AG04450 (cell line): ENCODE measurements at regions of chr17 and their contacts with region 1.

Region 1: DNA sequence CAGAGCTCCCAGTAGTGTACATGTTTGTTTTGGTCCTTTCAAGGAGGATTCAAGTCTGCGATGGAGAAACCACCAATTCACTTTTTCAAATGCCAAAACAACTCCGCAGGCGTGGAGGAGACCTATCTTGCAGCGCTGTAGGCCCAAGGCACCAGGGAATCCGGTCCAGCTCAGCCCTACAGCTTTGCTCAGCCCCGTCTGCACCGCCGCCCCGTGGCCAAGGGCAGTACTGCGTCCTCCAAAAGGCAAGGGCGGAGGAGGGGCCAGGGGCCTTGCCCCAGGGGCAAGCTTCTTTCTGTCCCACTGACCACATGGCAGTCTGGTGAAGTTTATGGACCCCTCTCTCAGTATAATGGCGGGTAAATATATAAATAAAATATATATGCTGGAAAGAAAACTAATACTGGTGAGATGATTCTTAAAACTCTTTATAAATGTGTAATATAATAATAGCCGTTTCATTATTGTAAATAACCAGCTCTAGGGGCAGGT is 709 bp upstream of the CD300LG start:
- DNase-seq: peak; percentile 33
- H3K4me3 ChIP-seq: no peak overlapping the region
- H3K27ac ChIP-seq: no peak overlapping the region
- H3K27me3 ChIP-seq: peaks cover 18% of the 10 kb centered on the region
- CTCF ChIP-seq: peak; percentile 99

Region 2: DNA sequence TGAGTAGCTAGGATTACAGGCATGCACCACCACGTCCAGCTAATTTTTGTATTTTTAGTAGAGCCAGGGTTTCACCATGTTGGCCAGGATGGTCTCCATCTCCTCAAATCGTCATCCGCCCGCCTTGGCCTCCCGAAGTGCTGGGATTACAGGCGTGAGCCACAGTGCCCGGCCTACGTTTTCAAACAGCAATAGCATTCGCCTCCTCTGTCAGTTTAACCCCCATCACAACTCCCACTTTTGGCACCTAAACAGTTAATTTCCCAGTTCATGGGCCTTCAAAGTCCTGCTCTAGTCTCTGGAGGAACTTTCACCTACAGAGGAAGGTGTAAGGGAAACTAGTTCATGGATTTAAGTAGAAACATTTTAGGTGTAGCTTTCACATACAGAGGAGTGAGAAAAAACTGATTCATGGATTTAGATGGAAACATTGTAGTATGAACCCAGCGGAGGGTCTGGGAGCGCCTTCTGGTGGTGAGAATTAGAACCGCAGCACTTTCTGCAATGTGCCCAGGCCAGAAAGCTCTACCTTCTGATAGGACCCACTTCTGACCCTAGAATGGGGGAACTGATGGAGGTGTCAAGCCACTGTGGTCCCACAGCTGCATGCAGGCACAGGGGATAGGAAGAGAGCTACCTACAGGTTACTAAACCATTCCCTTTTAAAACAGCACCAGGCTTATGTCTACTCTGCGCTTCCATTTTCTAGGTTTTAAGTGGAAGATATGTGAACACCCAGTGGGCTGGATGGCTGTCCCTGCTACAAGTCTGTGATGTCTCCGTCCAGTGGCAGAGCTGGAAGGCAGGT is 172.5 kb before region 1 on chr17:
- CTCF ChIA-PET with region 1: no interaction called
- POLR2A ChIA-PET with region 1: no interaction called
- DNase-seq: no peak
- H3K4me3 ChIP-seq: no peak overlapping the region
- H3K27ac ChIP-seq: no peak overlapping the region
- H3K27me3 ChIP-seq: peaks cover 3% of the 10 kb centered on the region
- CTCF ChIP-seq: peak; percentile 99

Region 3: GRCh38 chr17:43694077-43694870 is 152.0 kb before region 1 on chr17:
- CTCF ChIA-PET with region 1: interaction called, 10 read pairs
- POLR2A ChIA-PET with region 1: no interaction called
- DNase-seq: peak; percentile 55
- H3K4me3 ChIP-seq: no peak overlapping the region
- H3K27ac ChIP-seq: no peak overlapping the region
- H3K27me3 ChIP-seq: peaks cover 12% of the 10 kb centered on the region
- CTCF ChIP-seq: peak; percentile 92

Region 4: GRCh38 chr17:43760254-43760852 is 85.9 kb before region 1 on chr17:
- CTCF ChIA-PET with region 1: interaction called, 27 read pairs
- POLR2A ChIA-PET with region 1: no interaction called
- DNase-seq: peak; percentile 86
- H3K4me3 ChIP-seq: no peak overlapping the region
- H3K27ac ChIP-seq: no peak overlapping the region
- H3K27me3 ChIP-seq: peaks cover 29% of the 10 kb centered on the region
- CTCF ChIP-seq: peak; percentile 100

Region 5: GRCh38 chr17:43766413-43767052 is 79.7 kb before region 1 on chr17:
- CTCF ChIA-PET with region 1: interaction called, 27 read pairs
- POLR2A ChIA-PET with region 1: interaction called, 3 read pairs
- DNase-seq: no peak
- H3K4me3 ChIP-seq: no peak overlapping the region
- H3K27ac ChIP-seq: no peak overlapping the region
- H3K27me3 ChIP-seq: no peaks in the 10 kb centered on the region
- CTCF ChIP-seq: peak; percentile 82

Region 6: GRCh38 chr17:43790311-43790940 is 55.8 kb before region 1 on chr17:
- CTCF ChIA-PET with region 1: interaction called, 12 read pairs
- POLR2A ChIA-PET with region 1: no interaction called
- DNase-seq: no peak
- H3K4me3 ChIP-seq: no peak overlapping the region
- H3K27ac ChIP-seq: no peak overlapping the region
- H3K27me3 ChIP-seq: no peaks in the 10 kb centered on the region
- CTCF ChIP-seq: peak; percentile 27

Region 7: DNA sequence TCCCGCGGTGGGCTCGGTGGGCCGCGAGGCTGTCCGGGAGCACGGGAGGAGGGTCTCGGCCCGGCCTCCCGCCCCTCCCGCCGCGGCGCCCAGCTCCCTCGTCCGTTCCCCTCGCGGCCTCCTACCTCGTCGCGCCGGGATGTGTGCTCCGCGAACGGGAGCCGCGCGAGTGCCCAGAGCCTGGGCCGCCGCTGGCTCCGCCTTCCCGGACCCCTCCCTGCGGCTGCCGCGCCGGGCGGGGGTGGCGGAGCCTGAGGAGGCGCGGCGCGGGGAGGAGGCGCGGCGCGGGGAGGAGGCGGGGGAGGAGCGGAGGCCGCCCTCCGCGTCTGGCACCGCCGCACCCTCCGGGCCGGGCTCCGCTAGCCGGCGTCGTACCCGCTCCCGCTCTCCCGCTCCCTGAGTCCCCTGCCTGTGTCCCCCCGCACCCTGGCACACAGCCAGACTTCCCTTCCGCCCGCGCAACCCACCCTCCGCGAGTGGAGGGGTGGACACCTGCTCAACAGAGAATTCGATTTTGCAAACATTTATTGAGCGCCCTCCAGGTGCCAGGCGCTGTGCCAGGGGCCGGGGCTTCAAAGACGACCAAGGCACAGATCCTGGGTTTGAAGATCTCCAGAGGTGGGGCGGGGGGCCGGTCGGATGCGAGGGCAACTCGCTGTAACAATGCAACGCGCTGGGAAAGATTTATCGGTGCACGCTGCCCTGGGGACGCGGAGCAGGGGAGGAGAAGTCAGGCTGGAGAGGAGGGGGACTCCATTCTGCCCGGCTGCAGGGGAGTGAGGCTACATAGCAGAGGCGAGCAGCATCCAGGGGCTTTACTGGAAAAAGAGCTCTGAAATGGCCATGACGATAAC is 13.1 kb before region 1 on chr17 and contains the start of gene MPP3:
- CTCF ChIA-PET with region 1: interaction called, 12 read pairs
- POLR2A ChIA-PET with region 1: no interaction called
- DNase-seq: no peak
- H3K4me3 ChIP-seq: peak within 1 kb of the TSS; percentile 70
- H3K27ac ChIP-seq: peak within 1 kb of the TSS; percentile 21
- H3K27me3 ChIP-seq: peaks cover 2% of the 10 kb centered on the region
- CTCF ChIP-seq: no peak
- polyA plus RNA-seq, gene MPP3: 4.5 and 4.7 TPM in 2 replicates